ENCODE measurements at regions of chr6 and their contacts with region 1.

Region 1: GRCh38 chr6:66307490-66307889 is 600.5 kb upstream of the EYS start:
- DNase-seq: no peak
- H3K4me3 ChIP-seq: no peak overlapping the region
- H3K27ac ChIP-seq: no peak overlapping the region
- H3K4me1 ChIP-seq: no peaks in the 10 kb centered on the region
- H3K27me3 ChIP-seq: no peaks in the 10 kb centered on the region
- CTCF ChIP-seq: no peak

Region 2: GRCh38 chr6:66516377-66516776 is 208.9 kb after region 1 on chr6:
- CTCF ChIA-PET with region 1: no interaction called
- POLR2A ChIA-PET with region 1: interaction called, 12 read pairs
- intact Hi-C with region 1: no loop called
- DNase-seq: no peak
- H3K4me3 ChIP-seq: no peak overlapping the region
- H3K27ac ChIP-seq: no peak overlapping the region
- H3K4me1 ChIP-seq: peaks cover 30% of the 10 kb centered on the region
- H3K27me3 ChIP-seq: no peaks in the 10 kb centered on the region
- CTCF ChIP-seq: no peak

Region 3: GRCh38 chr6:66687611-66688140 is 380.2 kb after region 1 on chr6:
- CTCF ChIA-PET with region 1: no interaction called
- POLR2A ChIA-PET with region 1: no interaction called
- intact Hi-C with region 1: no loop called
- DNase-seq: no peak
- H3K4me3 ChIP-seq: no peak overlapping the region
- H3K27ac ChIP-seq: no peak overlapping the region
- H3K4me1 ChIP-seq: no peaks in the 10 kb centered on the region
- H3K27me3 ChIP-seq: no peaks in the 10 kb centered on the region
- CTCF ChIP-seq: no peak

Measured in A673 (cell line).